ENCODE measurements at regions of chr17 and their contacts with region 1.

Region 1: DNA sequence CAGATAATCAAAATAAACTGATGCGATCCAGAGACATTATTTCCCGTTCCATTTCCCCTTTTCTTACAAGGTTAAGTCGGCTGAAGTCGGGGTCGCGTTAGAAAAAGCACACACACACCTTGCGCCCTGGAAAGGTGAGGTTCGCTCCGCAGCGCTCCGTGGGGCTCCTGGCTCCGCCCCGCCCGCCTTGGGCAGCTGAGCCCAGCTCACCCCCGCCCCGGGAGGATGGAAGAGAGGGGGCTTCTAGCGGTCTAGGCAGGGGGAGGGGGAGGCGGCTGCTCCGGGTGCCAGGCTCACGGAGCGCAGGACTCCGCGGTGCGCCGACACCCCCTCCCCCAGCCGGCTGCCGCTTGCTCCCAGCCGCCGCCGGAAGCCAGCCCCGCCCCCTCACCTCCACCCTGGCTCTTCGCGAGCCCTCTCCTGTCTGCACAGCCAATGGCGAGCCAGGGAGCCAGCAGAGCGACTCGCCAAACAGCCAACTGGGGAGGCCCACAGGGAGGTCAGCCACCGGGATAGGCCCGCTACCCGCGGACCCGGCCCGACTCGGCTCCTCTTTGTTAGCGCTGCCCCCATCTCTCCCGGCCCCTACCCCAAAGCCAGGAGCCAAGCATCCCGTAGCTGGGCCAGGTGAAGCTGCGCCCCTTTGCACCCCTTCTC is 30.4 kb downstream of the FAM222B start:
- DNase-seq: peak; percentile 96 to 99 (median 99)

Region 2: DNA sequence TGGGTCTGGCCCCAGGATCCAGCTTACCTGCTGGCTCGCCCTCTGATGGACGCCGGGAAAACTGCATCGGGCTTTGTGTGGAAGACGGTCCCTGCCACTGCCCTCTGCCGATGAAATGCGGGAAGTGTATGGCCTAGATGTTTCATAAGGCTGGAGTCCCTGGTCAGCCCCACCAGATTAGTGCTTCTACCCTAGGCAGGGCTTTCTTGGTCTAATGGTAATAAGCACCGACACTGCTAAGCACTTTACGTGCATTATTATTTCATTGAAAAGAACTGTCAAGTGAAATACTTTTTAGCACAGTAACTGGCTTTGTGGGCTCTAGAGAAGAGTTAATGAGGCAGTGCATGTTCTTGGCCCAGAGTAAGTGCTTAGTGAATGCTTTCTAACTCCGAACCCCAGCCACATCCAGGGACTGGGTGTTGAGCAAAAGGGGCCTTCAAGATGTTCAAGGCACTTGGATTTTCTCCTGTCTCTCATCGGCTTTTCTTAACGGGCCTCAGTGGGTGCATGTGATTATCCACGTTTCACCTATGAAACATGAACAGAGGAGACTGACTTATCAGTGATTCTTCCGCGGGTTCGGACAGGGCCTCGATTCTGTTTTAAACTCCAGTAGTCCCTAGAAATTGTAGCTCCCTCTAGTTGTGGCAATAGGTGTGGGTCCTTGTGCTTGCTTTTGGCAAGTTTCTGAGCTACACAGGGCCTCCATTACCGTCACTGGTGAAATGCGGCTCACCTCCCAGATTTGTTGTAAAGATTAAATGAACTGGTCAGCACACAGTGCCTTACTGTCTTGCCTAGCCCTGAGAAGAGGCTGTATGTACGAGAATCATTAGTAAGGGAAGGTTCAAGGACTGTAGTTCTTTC is 61.8 kb before region 1 on chr17:
- intact Hi-C with region 1: loop called (anchors 10 kb)
- DNase-seq: peak; percentile 90 to 98 (median 95)

Region 3: GRCh38 chr17:28777178-28777577 is 35.0 kb before region 1 on chr17:
- intact Hi-C with region 1: no loop called
- DNase-seq: no peak

Region 4: GRCh38 chr17:28865946-28866752 is 53.9 kb after region 1 on chr17:
- intact Hi-C with region 1: no loop called
- DNase-seq: no peak

Region 5: DNA sequence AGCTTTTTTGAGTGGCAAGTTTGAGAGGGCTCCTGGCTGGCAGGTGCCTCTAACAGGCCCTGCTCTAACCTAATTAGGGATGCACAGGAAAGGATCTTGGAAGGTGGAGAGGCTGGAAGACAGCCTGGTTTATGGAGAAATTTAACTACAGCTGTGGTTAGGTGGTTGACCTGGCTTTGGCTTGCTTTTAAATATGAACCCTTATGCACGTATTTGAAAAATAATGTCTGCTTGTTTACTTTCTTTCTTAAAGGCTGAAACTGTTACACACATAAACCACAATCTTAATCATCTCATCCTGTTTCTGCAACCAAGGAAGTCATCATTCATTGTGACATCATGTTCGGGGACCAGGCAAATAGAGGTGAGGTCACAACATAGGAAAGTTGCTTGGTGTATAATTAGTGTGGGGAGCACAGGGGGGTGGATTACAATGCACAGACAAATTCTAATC is 113.7 kb after region 1 on chr17:
- intact Hi-C with region 1: no loop called
- DNase-seq: no peak

Region 6: DNA sequence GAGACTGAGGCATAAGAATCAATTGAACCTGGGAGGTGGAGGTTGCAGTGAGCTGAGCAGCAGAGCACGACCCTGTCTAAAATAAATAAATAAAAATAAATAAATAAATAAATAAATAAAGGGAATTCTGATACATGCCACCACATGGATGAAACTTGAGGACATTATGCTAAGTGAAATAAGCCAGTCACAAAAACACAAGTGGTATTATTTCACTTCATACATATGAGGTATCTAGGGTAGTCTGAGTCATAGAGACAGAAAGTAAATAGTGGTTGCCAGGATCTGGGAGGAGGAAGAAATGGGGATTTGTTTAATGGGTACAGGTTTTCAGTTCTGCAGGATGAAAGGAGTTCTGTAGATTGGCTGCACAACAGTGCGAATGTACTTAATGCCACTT is 247.1 kb after region 1 on chr17:
- intact Hi-C with region 1: no loop called
- DNase-seq: peak in 1 of 42 donors; percentile 33